Calu3 (cell line): ENCODE measurements at regions of chr3 and their contacts with region 1.

Region 1: DNA sequence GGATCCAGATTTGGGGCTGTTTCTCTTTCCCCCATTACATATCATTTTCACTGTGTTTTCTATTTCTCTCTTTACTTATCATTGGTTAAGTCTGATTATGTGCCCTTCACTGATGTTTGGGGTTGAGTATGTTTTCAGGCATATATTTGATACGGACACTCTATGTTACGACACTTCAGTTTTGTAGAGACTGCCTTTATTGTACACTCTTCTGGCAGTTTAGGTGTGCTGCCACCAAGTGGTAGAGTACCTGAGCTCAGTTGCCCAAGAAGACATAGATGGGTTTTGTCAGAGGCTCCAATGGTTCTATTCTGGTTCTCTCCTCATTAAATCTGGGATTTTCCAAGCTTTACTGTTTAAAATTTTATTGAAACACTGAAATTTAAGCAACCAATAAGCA is 255.0 kb upstream of the ROPN1 start:
- DNase-seq: peak; percentile 35
- H3K4me3 Mint-ChIP-seq: no peak overlapping the region
- H3K27ac Mint-ChIP-seq: no peak overlapping the region
- H3K4me1 Mint-ChIP-seq: peaks cover 25% of the 10 kb centered on the region
- H3K27me3 Mint-ChIP-seq: peaks cover 50% of the 10 kb centered on the region
- CTCF ChIP-seq: no peak

Region 2: GRCh38 chr3:124131580-124131979 is 115.4 kb before region 1 on chr3:
- CTCF ChIA-PET with region 1: no interaction called
- intact Hi-C with region 1: loop called (anchors 10 kb)
- DNase-seq: peak; percentile 22
- H3K4me3 Mint-ChIP-seq: no peak overlapping the region
- H3K27ac Mint-ChIP-seq: no peak overlapping the region
- H3K4me1 Mint-ChIP-seq: peaks cover 2% of the 10 kb centered on the region
- H3K27me3 Mint-ChIP-seq: peaks cover 35% of the 10 kb centered on the region
- CTCF ChIP-seq: no peak